A549 (cell line): ENCODE measurements at regions of chr1 and their contacts with region 1.

Region 1: DNA sequence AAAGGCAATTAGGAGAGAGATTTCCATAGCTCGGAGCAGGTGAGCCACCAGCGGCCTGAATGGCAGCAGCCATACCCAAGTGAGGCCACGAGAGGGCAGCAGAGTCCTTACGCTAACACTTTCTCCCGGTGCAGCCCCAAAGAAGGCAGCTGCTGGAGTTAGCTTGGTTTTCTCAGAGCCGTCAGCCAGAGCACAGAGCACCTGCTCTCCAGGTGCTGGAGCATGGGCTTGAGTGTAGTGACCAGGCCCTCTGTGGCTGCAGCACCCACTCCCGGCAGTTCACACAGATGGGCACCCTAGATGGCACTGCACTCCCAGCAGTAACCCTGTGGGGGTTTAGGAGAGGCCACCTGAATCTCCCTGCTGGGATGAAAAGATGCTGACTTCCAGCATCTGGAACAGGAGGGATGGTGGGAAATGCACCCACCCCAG is 45.8 kb downstream of the TMCC2 start:
- DNase-seq: peak; percentile 87 to 96
- ATAC-seq: peak; percentile 77 to 86
- H3K4me3 ChIP-seq: no peak overlapping the region
- H3K27ac ChIP-seq: peak overlapping the region; percentile 83 to 93
- H3K4me1 ChIP-seq: peaks cover 67% of the 10 kb centered on the region
- CTCF ChIP-seq: peak; percentile 98
- EP300 ChIP-seq: no peak
- POLR2A ChIP-seq: no peak
- RAD21 ChIP-seq: peak; percentile 99 to 100

Region 2: GRCh38 chr1:205227584-205228006 is 46.0 kb before region 1 on chr1 and contains the start of gene TMCC2:
- CTCF ChIA-PET with region 1: interaction called, 1,139 read pairs
- POLR2A ChIA-PET with region 1: no interaction called
- DNase-seq: peak; percentile 84 to 97
- ATAC-seq: peak; percentile 83 to 92
- H3K4me3 ChIP-seq: peak within 1 kb of the TSS; percentile 69
- H3K27ac ChIP-seq: peak within 1 kb of the TSS; percentile 64 to 88
- H3K4me1 ChIP-seq: peaks cover 12% of the 10 kb centered on the region; the same call in 2 of the 3 replicates
- CTCF ChIP-seq: no peak
- EP300 ChIP-seq: no peak
- POLR2A ChIP-seq: peak; percentile 51
- RAD21 ChIP-seq: no peak; a peak in 1 of 5 replicates
- polyA plus RNA-seq, gene TMCC2: 1.6 and 1.7 TPM in 2 replicates

Region 3: DNA sequence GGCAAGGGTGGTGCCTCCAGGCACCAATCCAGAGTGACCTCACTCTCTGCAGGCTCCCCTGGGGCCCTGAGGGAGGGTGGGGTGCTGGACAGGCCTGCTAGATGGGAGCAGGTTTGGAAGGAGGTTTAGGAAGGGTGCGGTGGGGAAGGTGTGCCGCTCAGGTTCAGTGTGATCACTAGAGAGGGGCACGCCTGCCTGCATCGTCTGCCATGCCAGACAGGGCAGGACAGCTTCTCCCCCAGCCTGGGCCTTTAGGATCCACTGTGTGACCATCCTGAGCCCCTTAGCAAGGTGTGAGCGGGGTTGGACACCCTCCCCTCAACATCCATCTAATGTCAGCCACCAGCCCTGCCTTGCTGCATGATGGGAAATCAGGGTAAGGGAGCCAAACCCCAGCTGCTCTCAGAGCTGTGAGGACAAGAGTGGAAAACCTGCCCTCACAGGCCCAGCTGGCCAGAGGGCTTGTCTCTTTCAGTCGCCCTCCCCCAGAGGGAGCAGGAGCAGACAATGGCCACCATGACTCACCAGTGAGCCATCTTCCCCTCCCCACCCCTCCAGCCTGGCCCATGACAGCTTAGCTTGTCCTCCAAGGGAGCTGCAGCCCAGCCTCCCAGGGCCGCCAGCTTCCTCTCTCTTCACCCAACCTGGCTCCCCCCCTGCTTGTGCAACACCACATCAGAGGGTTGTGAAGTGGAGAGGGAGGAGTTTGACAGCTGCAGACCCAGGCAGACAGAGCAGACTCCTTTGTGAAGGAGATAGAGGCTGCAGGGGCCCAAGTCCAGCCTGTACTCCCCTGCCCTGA is 11.0 kb after region 1 on chr1:
- CTCF ChIA-PET with region 1: interaction called, 161 read pairs
- POLR2A ChIA-PET with region 1: interaction called, 6 read pairs
- DNase-seq: peak; percentile 98 to 99
- ATAC-seq: peak; percentile 96 to 98
- H3K4me3 ChIP-seq: no peak overlapping the region
- H3K27ac ChIP-seq: peak overlapping the region; percentile 99 to 100
- H3K4me1 ChIP-seq: peaks cover 68% of the 10 kb centered on the region
- CTCF ChIP-seq: no peak
- EP300 ChIP-seq: peak; percentile 84 to 90; a peak in 4 of 5 replicates
- POLR2A ChIP-seq: no peak
- RAD21 ChIP-seq: peak; percentile 33 to 59; a peak in 4 of 5 replicates

Region 4: GRCh38 chr1:205300886-205301821 is 27.6 kb after region 1 on chr1:
- CTCF ChIA-PET with region 1: interaction called, 3,627 read pairs
- POLR2A ChIA-PET with region 1: interaction called, 24 read pairs
- DNase-seq: peak in 1 of 2 experiments; percentile 96
- ATAC-seq: peak; percentile 53 to 54
- H3K4me3 ChIP-seq: peak overlapping the region; percentile 8; the same call in 1 of the 3 replicates
- H3K27ac ChIP-seq: peak overlapping the region; percentile 98 to 99
- H3K4me1 ChIP-seq: peaks cover 94% of the 10 kb centered on the region
- CTCF ChIP-seq: no peak
- EP300 ChIP-seq: peak; percentile 95 to 99; a peak in 4 of 5 replicates
- POLR2A ChIP-seq: no peak
- RAD21 ChIP-seq: peak; percentile 32 to 62

Region 5: GRCh38 chr1:205382561-205382960 is 109.0 kb after region 1 on chr1:
- CTCF ChIA-PET with region 1: no interaction called
- POLR2A ChIA-PET with region 1: no interaction called
- DNase-seq: no peak
- ATAC-seq: no peak
- H3K4me3 ChIP-seq: no peak overlapping the region
- H3K27ac ChIP-seq: no peak overlapping the region
- H3K4me1 ChIP-seq: no peaks in the 10 kb centered on the region
- CTCF ChIP-seq: no peak
- EP300 ChIP-seq: no peak
- POLR2A ChIP-seq: no peak
- RAD21 ChIP-seq: no peak